HepG2 (cell line): ENCODE measurements at regions of chr12 and their contacts with region 1.

Region 1: DNA sequence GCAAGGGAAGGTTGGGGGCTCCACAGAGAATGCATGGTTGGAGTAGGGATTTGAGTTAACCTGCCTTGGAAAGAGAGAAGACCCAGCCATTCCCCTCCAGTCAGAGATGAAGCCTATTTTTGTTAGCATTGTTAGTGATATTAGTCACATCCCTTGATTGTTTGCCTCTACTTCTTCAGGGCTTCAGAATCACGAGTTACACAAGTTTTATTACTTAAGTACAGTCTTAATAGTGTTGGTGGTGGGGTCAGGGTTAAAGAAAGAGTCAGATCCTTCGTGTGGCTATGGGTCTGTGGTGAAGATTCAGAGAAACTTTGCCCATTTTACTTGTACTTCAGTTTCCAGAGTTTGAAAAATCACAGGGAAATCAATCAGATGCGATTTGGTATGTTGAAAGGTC is 363.1 kb downstream of the LRIG3 start:
- DNase-seq: no peak
- ATAC-seq: no peak
- H3K4me3 ChIP-seq: no peak overlapping the region
- H3K27ac ChIP-seq: no peak overlapping the region
- H3K4me1 ChIP-seq: no peaks in the 10 kb centered on the region
- H3K27me3 ChIP-seq: no peaks in the 10 kb centered on the region
- CTCF ChIP-seq: no peak
- EP300 ChIP-seq: no peak
- POLR2A ChIP-seq: no peak
- RAD21 ChIP-seq: no peak

Region 2: GRCh38 chr12:58575256-58575655 is 18.1 kb after region 1 on chr12:
- CTCF ChIA-PET with region 1: no interaction called
- POLR2A ChIA-PET with region 1: no interaction called
- in situ Hi-C with region 1: no loop called
- intact Hi-C with region 1: loop called (anchors 1 kb)
- DNase-seq: no peak
- ATAC-seq: no peak
- H3K4me3 ChIP-seq: no peak overlapping the region
- H3K27ac ChIP-seq: no peak overlapping the region
- H3K4me1 ChIP-seq: no peaks in the 10 kb centered on the region
- H3K27me3 ChIP-seq: peaks cover 0 to 3% of the 10 kb centered on the region in 2 experiments; a peak in 1 of 5 replicates
- CTCF ChIP-seq: no peak
- EP300 ChIP-seq: no peak
- POLR2A ChIP-seq: no peak
- RAD21 ChIP-seq: no peak